Activated CD4-positive, alpha-beta T cell treated with anti-CD3 and anti-CD28 coated beads for 36 hours (primary cell): ENCODE measurements at regions of chr2 and their contacts with region 1.

Region 1: DNA sequence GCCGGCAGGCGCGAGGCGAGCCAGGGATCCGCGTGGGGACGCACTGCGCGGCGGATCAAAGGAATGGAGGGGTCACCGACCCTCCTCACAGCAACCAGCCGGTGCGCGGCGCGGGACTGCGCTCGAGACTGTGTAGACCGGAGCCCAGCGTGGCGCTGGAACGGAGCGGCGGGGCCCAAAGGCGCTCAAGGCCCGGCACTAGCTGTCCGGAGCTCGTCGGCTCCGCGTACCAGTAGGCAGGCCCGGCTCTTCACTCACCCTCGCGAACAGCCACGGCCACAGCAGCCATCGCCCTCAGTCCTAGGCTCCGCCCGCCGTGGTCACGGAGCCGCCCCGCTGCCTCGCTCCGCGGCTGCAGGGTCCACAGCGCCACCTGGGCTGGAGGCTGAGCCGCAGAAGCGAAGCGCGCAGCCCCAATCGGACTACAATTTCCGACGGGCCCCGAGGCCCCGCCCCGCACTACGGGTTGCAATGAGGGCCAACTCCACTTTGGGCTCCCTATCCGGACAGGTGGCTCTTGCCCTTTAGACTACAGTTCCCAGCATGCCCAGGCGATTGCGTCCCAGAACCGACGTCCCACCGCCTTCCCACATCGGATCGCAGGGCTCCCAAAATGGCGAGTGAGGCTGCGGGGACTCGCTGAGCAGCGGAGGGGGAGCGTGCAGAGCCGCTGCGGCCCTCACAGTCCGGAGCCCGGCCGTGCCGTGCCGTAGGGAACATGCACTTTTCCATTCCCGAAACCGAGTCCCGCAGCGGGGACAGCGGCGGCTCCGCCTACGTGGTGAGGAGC is at the starts of genes EIF2B4 and SNX17:
- DNase-seq: peak; percentile 99
- ATAC-seq: peak; percentile 95
- H3K4me3 Mint-ChIP-seq: peak within 1 kb of the TSS; percentile 90
- H3K27ac Mint-ChIP-seq: peak within 1 kb of the TSS; percentile 95
- H3K4me1 Mint-ChIP-seq: peaks cover 39% of the 10 kb centered on the region
- H3K27me3 Mint-ChIP-seq: no peaks in the 10 kb centered on the region
- total RNA-seq, gene EIF2B4: 31.0 to 39.2 TPM
- total RNA-seq, gene SNX17: 63.9 to 82.1 TPM

Region 2: DNA sequence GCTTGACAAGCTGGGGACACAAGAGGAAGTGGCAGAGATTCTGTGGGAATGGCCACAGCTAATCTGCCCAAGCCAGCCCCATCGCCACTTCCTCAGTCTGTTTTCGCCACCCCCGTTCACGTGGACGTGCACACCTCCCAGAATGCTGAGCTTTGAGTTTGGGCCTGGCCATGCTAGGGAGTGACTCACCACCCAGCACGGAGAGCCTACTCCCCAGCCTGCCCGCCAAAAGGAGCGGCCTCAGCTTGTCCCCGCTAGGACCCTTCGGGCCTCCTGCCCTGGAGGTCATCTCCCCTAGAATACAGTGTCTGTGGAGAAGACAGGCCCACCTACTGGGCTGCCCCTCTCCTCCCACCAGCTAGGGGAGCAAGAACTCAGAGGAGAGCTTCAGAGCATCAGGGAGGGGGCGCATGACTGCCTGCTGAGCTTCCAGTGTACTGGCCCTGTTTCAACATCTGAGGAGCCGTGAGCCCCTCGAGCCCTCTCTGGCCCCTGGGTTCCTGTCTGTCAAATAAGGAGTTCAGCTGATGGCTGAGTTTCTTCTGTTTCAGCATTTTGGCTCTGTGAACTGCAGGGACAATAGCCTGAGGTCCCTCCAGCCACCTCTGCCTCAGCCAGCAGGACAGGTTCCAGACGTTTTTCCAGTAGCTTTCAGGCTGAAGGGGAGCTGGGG is 601.0 kb before region 1 on chr2:
- CTCF ChIA-PET with region 1: no interaction called
- POLR2A ChIA-PET with region 1: no interaction called
- intact Hi-C with region 1: no loop called
- DNase-seq: peak; percentile 47
- ATAC-seq: peak; percentile 31
- H3K4me3 Mint-ChIP-seq: no peak overlapping the region
- H3K27ac Mint-ChIP-seq: peak overlapping the region; percentile 60
- H3K4me1 Mint-ChIP-seq: peaks cover 64% of the 10 kb centered on the region
- H3K27me3 Mint-ChIP-seq: no peaks in the 10 kb centered on the region

Region 3: DNA sequence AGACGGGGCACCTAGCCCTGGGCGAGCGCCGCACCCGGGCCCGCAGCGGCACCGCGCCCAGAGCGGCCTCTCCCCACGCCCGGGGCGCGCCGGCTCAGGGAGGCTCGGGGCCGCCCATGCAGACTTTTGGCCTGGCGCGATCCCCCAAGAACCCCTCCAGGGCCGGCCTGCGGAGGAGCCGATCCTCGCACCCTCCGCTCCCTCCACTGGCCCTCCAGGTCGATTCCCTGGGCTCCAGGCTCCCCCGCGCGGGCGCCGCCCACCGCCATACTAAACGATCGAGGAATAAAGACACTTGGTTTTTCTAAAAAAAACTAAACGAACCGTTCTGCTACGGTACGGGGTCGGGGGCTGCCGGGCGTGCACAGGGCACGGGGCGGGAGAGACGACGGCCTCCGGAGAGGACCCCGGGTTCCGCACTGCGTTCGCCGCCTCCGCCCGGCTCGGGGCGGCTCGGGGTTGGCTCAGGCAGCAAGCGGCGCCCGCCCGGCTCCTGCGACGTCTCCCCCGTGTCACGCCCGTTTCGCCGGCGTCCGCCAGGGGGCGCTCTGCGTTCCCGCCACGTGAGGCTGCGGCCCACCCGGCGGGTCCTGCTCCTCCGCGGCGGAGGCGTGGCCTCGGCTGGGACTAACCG is 284.0 kb before region 1 on chr2:
- CTCF ChIA-PET with region 1: no interaction called
- POLR2A ChIA-PET with region 1: no interaction called
- intact Hi-C with region 1: loop called in 1 of 2 experiments (anchors 1 kb)
- DNase-seq: peak; percentile 98
- ATAC-seq: peak; percentile 89
- H3K4me3 Mint-ChIP-seq: peak overlapping the region; percentile 77
- H3K27ac Mint-ChIP-seq: peak overlapping the region; percentile 82
- H3K4me1 Mint-ChIP-seq: peaks cover 24% of the 10 kb centered on the region
- H3K27me3 Mint-ChIP-seq: no peaks in the 10 kb centered on the region

Region 4: DNA sequence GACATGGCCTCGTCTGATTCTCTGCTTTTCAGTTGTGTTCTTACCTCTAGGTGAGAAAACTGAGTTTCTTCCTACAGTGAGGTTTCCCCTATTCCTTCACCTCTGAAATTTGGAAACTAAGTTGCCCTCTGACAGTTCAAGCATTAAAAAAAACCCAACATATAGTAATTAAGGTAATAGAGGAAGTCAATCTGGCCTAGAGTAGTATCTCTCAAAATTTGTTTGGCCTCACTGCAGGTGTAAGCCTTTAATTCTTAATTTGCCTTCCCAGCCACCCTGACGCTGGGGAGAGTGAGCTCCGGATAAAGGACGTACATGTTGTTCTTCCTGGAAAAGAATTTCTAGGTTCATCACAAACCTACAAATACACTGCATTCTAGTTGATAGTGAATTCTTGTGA is 151.6 kb before region 1 on chr2:
- CTCF ChIA-PET with region 1: no interaction called
- POLR2A ChIA-PET with region 1: no interaction called
- intact Hi-C with region 1: no loop called
- DNase-seq: no peak
- ATAC-seq: no peak
- H3K4me3 Mint-ChIP-seq: peak overlapping the region; percentile 93
- H3K27ac Mint-ChIP-seq: peak overlapping the region; percentile 87
- H3K4me1 Mint-ChIP-seq: peaks cover 34% of the 10 kb centered on the region
- H3K27me3 Mint-ChIP-seq: no peaks in the 10 kb centered on the region

Region 5: DNA sequence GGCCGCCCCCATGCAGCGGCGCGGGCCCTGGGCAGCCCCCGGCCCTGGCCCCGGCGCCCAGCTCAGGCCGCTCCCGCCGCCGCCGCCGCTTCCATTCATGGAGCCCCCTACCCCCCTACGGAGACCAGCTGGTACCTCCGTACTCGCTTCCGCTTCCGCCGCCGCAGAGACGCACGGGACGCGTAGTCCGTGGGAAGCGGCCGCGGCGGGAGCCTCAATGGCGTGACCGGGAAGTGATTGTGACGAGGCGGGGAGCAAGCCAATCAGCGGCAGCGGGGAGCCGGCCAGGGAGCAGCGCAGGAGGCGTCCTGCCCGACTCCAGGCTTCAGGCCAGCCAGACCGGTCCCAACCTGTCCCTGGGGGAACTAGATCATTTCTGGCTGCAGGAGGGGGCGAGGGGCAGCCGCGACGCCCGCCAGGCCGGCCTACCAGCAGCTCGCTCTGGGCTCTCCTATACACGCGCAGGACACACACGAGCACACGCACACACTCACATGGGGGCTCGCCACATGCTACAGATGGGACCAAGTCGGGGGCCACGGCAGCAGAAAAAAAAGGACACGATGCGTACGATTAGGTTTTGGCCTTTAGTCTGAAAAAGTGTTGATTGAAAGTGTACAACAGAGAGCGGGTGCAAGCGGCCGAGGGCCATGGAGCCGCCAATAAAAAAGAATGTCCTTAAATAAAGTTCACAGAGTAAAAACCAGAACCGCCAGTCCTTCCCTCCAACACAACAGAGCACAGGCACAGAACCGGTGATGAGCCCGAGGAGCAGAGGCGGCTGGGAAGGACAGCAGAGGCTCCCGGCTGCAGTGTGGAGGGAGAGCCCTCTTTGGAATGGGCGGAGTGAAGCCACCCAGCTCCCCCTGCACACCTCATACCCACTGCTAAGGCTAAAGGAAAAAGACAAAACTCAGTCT is 10.7 kb after region 1 on chr2 and contains the start of gene ZNF513:
- CTCF ChIA-PET with region 1: interaction called, 18 read pairs
- POLR2A ChIA-PET with region 1: no interaction called
- intact Hi-C with region 1: loop called (anchors 1 kb)
- DNase-seq: peak; percentile 95
- ATAC-seq: peak; percentile 91
- H3K4me3 Mint-ChIP-seq: peak within 1 kb of the TSS; percentile 89
- H3K27ac Mint-ChIP-seq: peak within 1 kb of the TSS; percentile 96
- H3K4me1 Mint-ChIP-seq: peaks cover 29% of the 10 kb centered on the region
- H3K27me3 Mint-ChIP-seq: no peaks in the 10 kb centered on the region
- total RNA-seq, gene ZNF513: 7.7 to 10.5 TPM

Region 6: DNA sequence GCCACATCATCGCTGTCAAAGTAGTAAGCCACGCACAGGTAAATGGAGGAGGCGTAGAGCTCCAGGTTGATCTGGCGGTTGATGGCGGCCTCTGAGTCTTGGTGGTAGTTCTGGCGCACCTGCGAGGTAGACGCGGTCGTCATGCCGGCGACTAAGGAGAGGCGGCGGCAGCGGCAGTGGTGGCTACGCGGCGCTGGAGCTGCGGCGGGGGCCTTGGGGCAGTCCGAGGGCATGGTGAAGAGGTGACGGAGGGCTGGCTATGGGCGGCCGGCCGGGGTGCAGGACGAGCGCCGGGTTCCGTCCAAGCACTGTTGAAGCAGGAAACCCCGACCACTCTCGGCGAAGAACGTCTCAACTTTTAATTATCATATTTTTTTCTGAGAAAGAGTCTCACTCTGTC is 23.0 kb after region 1 on chr2:
- CTCF ChIA-PET with region 1: no interaction called
- POLR2A ChIA-PET with region 1: no interaction called
- intact Hi-C with region 1: no loop called
- DNase-seq: no peak
- ATAC-seq: no peak
- H3K4me3 Mint-ChIP-seq: no peak overlapping the region
- H3K27ac Mint-ChIP-seq: no peak overlapping the region
- H3K4me1 Mint-ChIP-seq: peaks cover 35% of the 10 kb centered on the region
- H3K27me3 Mint-ChIP-seq: no peaks in the 10 kb centered on the region

Region 7: DNA sequence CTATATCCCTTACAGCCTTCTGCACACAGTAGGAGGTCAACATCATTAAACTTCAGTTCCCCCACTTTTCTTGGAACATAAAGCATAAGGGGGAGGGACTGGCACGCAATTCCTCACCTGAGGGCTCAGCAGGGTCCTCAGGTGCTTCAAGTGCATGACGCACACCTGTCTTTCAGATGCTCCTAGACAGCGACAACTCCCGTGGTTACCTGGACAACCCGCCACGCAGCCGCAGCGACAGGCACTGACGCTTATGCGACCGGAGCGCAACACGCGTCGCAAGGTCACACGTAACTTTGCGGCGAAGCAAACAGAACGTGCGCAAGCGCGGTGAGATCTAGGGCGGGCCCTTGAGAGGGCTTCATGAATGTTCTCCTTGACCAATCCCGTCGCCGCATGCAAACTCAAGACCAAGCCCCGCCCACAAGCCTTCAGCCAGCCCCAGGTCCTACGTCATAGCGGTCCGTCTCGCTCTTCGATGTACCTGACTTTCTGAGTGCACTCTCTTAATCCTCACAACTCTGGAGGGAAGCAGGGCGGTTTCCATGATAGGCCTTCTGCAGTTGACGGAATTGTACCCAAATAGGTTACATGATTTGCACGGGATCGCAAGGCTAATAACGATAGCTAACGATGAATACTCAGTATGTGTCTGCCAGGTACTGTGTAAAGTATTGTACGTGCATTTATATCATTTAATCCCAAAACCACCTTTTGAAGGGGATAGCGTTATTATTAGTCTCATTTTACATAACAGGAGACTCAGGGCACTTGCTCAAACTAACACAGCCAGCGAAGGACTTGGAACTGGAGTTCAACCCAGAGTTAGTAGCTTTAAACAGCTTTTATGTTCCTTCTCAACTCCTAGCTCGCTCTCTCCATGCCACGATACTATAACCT is 119.5 kb after region 1 on chr2 and contains the start of gene IFT172:
- CTCF ChIA-PET with region 1: no interaction called
- POLR2A ChIA-PET with region 1: no interaction called
- intact Hi-C with region 1: loop called (anchors 1 to 2 kb)
- DNase-seq: peak; percentile 100
- ATAC-seq: peak; percentile 97
- H3K4me3 Mint-ChIP-seq: peak within 1 kb of the TSS; percentile 75
- H3K27ac Mint-ChIP-seq: peak within 1 kb of the TSS; percentile 63
- H3K4me1 Mint-ChIP-seq: peaks cover 23% of the 10 kb centered on the region
- H3K27me3 Mint-ChIP-seq: peaks cover 11% of the 10 kb centered on the region
- total RNA-seq, gene IFT172: 8.7 TPM

Region 8: GRCh38 chr2:27628767-27629709 is 258.8 kb after region 1 on chr2 and contains the starts of genes CCDC121 and GPN1:
- CTCF ChIA-PET with region 1: interaction called, 4 read pairs
- POLR2A ChIA-PET with region 1: no interaction called
- intact Hi-C with region 1: loop called in 1 of 2 experiments (anchors 1 kb)
- DNase-seq: peak; percentile 98
- ATAC-seq: peak; percentile 96
- H3K4me3 Mint-ChIP-seq: no peak within 1 kb of the TSS
- H3K27ac Mint-ChIP-seq: no peak within 1 kb of the TSS
- H3K4me1 Mint-ChIP-seq: peaks cover 37% of the 10 kb centered on the region
- H3K27me3 Mint-ChIP-seq: no peaks in the 10 kb centered on the region
- total RNA-seq, gene CCDC121: 0.11 to 0.44 TPM
- total RNA-seq, gene GPN1: 45.6 to 63.9 TPM

Region 9: GRCh38 chr2:27663463-27664249 is 293.4 kb after region 1 on chr2 and contains the starts of genes SLC4A1AP and SUPT7L:
- CTCF ChIA-PET with region 1: interaction called, 3 read pairs
- POLR2A ChIA-PET with region 1: no interaction called
- intact Hi-C with region 1: loop called in 1 of 2 experiments (anchors 1 kb)
- DNase-seq: peak; percentile 80
- ATAC-seq: peak; percentile 81
- H3K4me3 Mint-ChIP-seq: peak within 1 kb of the TSS; percentile 98
- H3K27ac Mint-ChIP-seq: peak within 1 kb of the TSS; percentile 100
- H3K4me1 Mint-ChIP-seq: peaks cover 42% of the 10 kb centered on the region
- H3K27me3 Mint-ChIP-seq: no peaks in the 10 kb centered on the region
- total RNA-seq, gene SLC4A1AP: 23.8 to 25.3 TPM
- total RNA-seq, gene SUPT7L: 23.7 to 26.1 TPM